CD4-positive, alpha-beta memory T cell (primary cell): ENCODE measurements at regions of chr20 and their contacts with region 1.

Region 1: GRCh38 chr20:64038565-64039292 is 2.7 kb downstream of the C20orf204 start:
- DNase-seq: peak; percentile 65 to 76 (median 71)
- H3K4me3 ChIP-seq: peak overlapping the region; percentile 29 to 72
- H3K4me3 Mint-ChIP-seq: peak overlapping the region; percentile 17 to 82 (median 57)
- H3K27ac ChIP-seq: peak overlapping the region; percentile 35
- H3K27ac Mint-ChIP-seq: peak overlapping the region in 2 of 7 donors; percentile 43 to 69
- H3K4me1 ChIP-seq: peaks cover 74% of the 10 kb centered on the region
- H3K4me1 Mint-ChIP-seq: peaks cover 13 to 63% (median 34%) of the 10 kb centered on the region in 4 donors
- H3K27me3 ChIP-seq: no peaks in the 10 kb centered on the region
- H3K27me3 Mint-ChIP-seq: no peaks in the 10 kb centered on the region

Region 2: GRCh38 chr20:63756648-63756991 is 282.1 kb before region 1 on chr20:
- CTCF ChIA-PET with region 1: no interaction called
- POLR2A ChIA-PET with region 1: no interaction called
- intact Hi-C with region 1: no loop called
- DNase-seq: peak in 2 of 5 donors; percentile 25 to 52
- H3K4me3 ChIP-seq: no peak overlapping the region
- H3K4me3 Mint-ChIP-seq: peak overlapping the region in 1 of 8 donors; percentile 50
- H3K27ac ChIP-seq: no peak overlapping the region
- H3K27ac Mint-ChIP-seq: peak overlapping the region in 3 of 7 donors; percentile 6 to 57 (median 20)
- H3K4me1 ChIP-seq: peaks cover 10% of the 10 kb centered on the region
- H3K4me1 Mint-ChIP-seq: peaks cover 5 to 32% (median 14%) of the 10 kb centered on the region in 4 donors
- H3K27me3 ChIP-seq: no peaks in the 10 kb centered on the region
- H3K27me3 Mint-ChIP-seq: peaks cover 0 to 2% of the 10 kb centered on the region in 2 donors

Region 3: GRCh38 chr20:63884506-63885263 is 154.0 kb before region 1 on chr20:
- CTCF ChIA-PET with region 1: no interaction called
- POLR2A ChIA-PET with region 1: no interaction called
- intact Hi-C with region 1: no loop called
- DNase-seq: no peak
- H3K4me3 ChIP-seq: no peak overlapping the region
- H3K4me3 Mint-ChIP-seq: no peak overlapping the region
- H3K27ac ChIP-seq: no peak overlapping the region
- H3K27ac Mint-ChIP-seq: no peak overlapping the region
- H3K4me1 ChIP-seq: no peaks in the 10 kb centered on the region
- H3K4me1 Mint-ChIP-seq: peaks cover 0 to 1% (median 0%) of the 10 kb centered on the region in 4 donors
- H3K27me3 ChIP-seq: no peaks in the 10 kb centered on the region
- H3K27me3 Mint-ChIP-seq: no peaks in the 10 kb centered on the region

Region 4: GRCh38 chr20:63980806-63981728 is 57.7 kb before region 1 on chr20 and contains the start of gene PRPF6:
- CTCF ChIA-PET with region 1: interaction called, 84 read pairs
- POLR2A ChIA-PET with region 1: interaction called, 71 read pairs
- intact Hi-C with region 1: loop called (anchors 1 kb)
- DNase-seq: peak; percentile 91 to 94 (median 94)
- H3K4me3 ChIP-seq: peak within 1 kb of the TSS; percentile 42 to 67
- H3K4me3 Mint-ChIP-seq: peak within 1 kb of the TSS; percentile 90 to 99 (median 93)
- H3K27ac ChIP-seq: peak within 1 kb of the TSS; percentile 69
- H3K27ac Mint-ChIP-seq: peak within 1 kb of the TSS; percentile 95 to 99 (median 98)
- H3K4me1 ChIP-seq: peaks cover 54% of the 10 kb centered on the region
- H3K4me1 Mint-ChIP-seq: peaks cover 48 to 72% (median 60%) of the 10 kb centered on the region in 4 donors
- H3K27me3 ChIP-seq: no peaks in the 10 kb centered on the region
- H3K27me3 Mint-ChIP-seq: no peaks in the 10 kb centered on the region
- total RNA-seq, gene PRPF6: 86.4 to 88.7 TPM

Region 5: GRCh38 chr20:64053841-64054661 is 15.3 kb after region 1 on chr20:
- CTCF ChIA-PET with region 1: interaction called, 133 read pairs
- POLR2A ChIA-PET with region 1: interaction called, 15 read pairs
- intact Hi-C with region 1: loop called (anchors 1 kb)
- DNase-seq: no peak
- H3K4me3 ChIP-seq: no peak overlapping the region
- H3K4me3 Mint-ChIP-seq: no peak overlapping the region
- H3K27ac ChIP-seq: no peak overlapping the region
- H3K27ac Mint-ChIP-seq: no peak overlapping the region
- H3K4me1 ChIP-seq: peaks cover 23% of the 10 kb centered on the region
- H3K4me1 Mint-ChIP-seq: peaks cover 3 to 17% (median 9%) of the 10 kb centered on the region in 4 donors
- H3K27me3 ChIP-seq: peaks cover 15% of the 10 kb centered on the region
- H3K27me3 Mint-ChIP-seq: peaks cover 14 to 20% of the 10 kb centered on the region in 2 donors

Region 6: DNA sequence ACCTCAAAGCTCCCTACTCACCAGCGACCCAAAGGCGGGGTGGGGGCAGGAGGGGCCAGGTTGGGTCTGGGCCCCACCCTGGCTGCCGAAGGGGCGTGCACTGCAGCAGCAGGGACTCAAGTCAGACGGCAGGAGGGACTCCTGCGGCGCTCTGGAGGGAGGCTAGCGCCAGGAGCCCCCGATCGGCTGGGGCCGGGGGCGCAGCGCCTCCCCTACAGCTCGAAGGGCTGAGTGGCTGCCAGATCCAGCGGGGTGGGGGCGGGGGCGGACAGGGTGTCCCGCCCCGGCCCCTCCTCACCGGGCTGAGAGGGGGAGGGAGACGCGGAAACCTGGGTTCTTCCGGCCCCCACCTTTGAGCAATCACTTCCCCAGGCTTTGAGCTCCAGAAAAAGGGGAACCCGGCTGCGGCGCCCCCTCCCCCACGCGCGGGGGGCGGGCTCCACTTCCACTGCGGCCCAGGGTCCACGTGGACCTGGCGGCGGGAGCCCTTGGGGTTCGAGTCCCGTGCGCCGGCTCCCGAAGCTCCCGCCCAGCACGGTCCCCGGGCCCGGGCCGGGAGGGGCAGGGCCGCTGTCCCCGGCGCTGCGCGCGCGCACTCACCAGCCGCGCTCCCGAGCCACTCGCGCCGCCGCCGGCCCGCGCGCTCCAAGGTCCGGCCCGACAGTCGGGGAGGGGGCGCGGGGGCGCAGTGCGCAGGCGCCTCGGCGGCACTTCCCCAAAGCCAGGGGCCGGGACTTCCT is 40.7 kb after region 1 on chr20 and contains the start of gene RGS19:
- CTCF ChIA-PET with region 1: interaction called, 39 read pairs
- POLR2A ChIA-PET with region 1: interaction called, 17 read pairs
- intact Hi-C with region 1: loop called (anchors 1 kb)
- DNase-seq: peak; percentile 64 to 80 (median 67)
- H3K4me3 ChIP-seq: peak within 1 kb of the TSS; percentile 73 to 97
- H3K4me3 Mint-ChIP-seq: peak within 1 kb of the TSS; percentile 86 to 95 (median 90)
- H3K27ac ChIP-seq: peak within 1 kb of the TSS; percentile 74
- H3K27ac Mint-ChIP-seq: peak within 1 kb of the TSS; percentile 83 to 93 (median 92)
- H3K4me1 ChIP-seq: peaks cover 47% of the 10 kb centered on the region
- H3K4me1 Mint-ChIP-seq: peaks cover 10 to 61% (median 34%) of the 10 kb centered on the region in 4 donors
- H3K27me3 ChIP-seq: no peaks in the 10 kb centered on the region
- H3K27me3 Mint-ChIP-seq: no peaks in the 10 kb centered on the region
- total RNA-seq, gene RGS19: 35.0 to 35.6 TPM

Region 7: GRCh38 chr20:64145458-64145857 is 106.7 kb after region 1 on chr20:
- CTCF ChIA-PET with region 1: no interaction called
- POLR2A ChIA-PET with region 1: no interaction called
- intact Hi-C with region 1: no loop called
- DNase-seq: no peak
- H3K4me3 ChIP-seq: no peak overlapping the region
- H3K4me3 Mint-ChIP-seq: no peak overlapping the region
- H3K27ac ChIP-seq: no peak overlapping the region
- H3K27ac Mint-ChIP-seq: no peak overlapping the region
- H3K4me1 ChIP-seq: no peaks in the 10 kb centered on the region
- H3K4me1 Mint-ChIP-seq: peaks cover 0 to 4% (median under 1%) of the 10 kb centered on the region in 4 donors
- H3K27me3 ChIP-seq: no peaks in the 10 kb centered on the region
- H3K27me3 Mint-ChIP-seq: peaks cover 5 to 8% of the 10 kb centered on the region in 2 donors